Gastrocnemius medialis (tissue), 4 donors: ENCODE measurements at regions of chr11 and their contacts with region 1.

Region 1: DNA sequence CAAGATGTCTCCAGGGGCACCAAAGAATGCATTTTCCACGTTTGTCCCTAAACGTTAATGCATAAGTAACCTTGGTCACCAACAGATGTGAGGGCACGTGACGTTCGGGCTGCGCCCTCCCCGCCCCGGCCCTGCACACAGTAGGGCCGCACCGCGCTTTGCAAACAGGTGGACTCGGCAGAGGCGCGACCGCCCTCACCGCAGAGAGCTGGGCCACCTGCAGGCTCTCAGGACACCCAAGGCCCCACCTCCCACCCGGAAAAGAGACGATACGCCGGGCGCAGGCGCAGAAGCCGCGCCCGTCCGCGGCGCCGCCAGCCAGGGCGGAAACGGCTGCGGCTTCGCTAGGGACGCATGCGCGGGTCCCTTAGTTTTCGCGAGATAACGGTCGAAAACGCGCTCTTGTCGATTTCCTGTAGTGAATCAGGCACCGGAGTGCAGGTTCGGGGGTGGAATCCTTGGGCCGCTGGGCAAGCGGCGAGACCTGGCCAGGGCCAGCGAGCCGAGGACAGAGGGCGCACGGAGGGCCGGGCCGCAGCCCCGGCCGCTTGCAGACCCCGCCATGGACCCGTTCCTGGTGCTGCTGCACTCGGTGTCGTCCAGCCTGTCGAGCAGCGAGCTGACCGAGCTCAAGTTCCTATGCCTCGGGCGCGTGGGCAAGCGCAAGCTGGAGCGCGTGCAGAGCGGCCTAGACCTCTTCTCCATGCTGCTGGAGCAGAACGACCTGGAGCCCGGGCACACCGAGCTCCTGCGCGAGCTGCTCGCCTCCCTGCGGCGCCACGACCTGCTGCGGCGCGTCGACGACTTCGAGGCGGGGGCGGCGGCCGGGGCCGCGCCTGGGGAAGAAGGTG is at the start of gene FADD:
- DNase-seq: peak; percentile 80 to 83
- ATAC-seq: peak; percentile 95
- H3K4me3 ChIP-seq: peak within 1 kb of the TSS; percentile 77 to 97 (median 92)
- H3K27ac ChIP-seq: peak within 1 kb of the TSS; percentile 81 to 92 (median 91)
- H3K4me1 ChIP-seq: peaks cover 14 to 18% of the 10 kb centered on the region in 2 donors
- H3K27me3 ChIP-seq: no peaks in the 10 kb centered on the region
- CTCF ChIP-seq: no peak
- POLR2A ChIP-seq: peak; percentile 70 to 81
- total RNA-seq, gene FADD: 6.9 to 17.3 (median 10.4) TPM

Region 2: GRCh38 chr11:69683764-69684333 is 519.3 kb before region 1 on chr11:
- in situ Hi-C with region 1: loop called (anchors 10 kb)
- intact Hi-C with region 1: no loop called
- DNase-seq: no peak
- ATAC-seq: no peak
- H3K4me3 ChIP-seq: no peak overlapping the region
- H3K27ac ChIP-seq: no peak overlapping the region
- H3K4me1 ChIP-seq: peaks cover 0 to 8% of the 10 kb centered on the region in 2 donors
- H3K27me3 ChIP-seq: peaks cover 0 to 2% (median 0%) of the 10 kb centered on the region in 3 donors
- CTCF ChIP-seq: no peak
- POLR2A ChIP-seq: no peak

Region 3: GRCh38 chr11:70270104-70270876 is 67.2 kb after region 1 on chr11 and contains the start of gene PPFIA1:
- in situ Hi-C with region 1: no loop called
- intact Hi-C with region 1: loop called (anchors 1 kb)
- DNase-seq: peak; percentile 93 to 94
- ATAC-seq: peak; percentile 95 to 96
- H3K4me3 ChIP-seq: peak within 1 kb of the TSS; percentile 74 to 95 (median 82)
- H3K27ac ChIP-seq: peak within 1 kb of the TSS; percentile 80 to 95 (median 86)
- H3K4me1 ChIP-seq: peaks cover 26 to 35% of the 10 kb centered on the region in 2 donors
- H3K27me3 ChIP-seq: peaks cover 0 to 6% (median 2%) of the 10 kb centered on the region in 3 donors
- CTCF ChIP-seq: no peak
- POLR2A ChIP-seq: peak; percentile 98 to 99
- total RNA-seq, gene PPFIA1: 36.3 to 90.6 (median 46.0) TPM

Region 4: GRCh38 chr11:70397983-70398833 is 195.1 kb after region 1 on chr11 and contains the start of gene CTTN:
- in situ Hi-C with region 1: no loop called
- intact Hi-C with region 1: loop called (anchors 10 kb)
- DNase-seq: peak; percentile 56 to 76
- ATAC-seq: peak; percentile 67 to 72
- H3K4me3 ChIP-seq: peak within 1 kb of the TSS; percentile 78 to 99 (median 89)
- H3K27ac ChIP-seq: peak within 1 kb of the TSS; percentile 90 to 97 (median 95)
- H3K4me1 ChIP-seq: peaks cover 24 to 30% of the 10 kb centered on the region in 2 donors
- H3K27me3 ChIP-seq: no peaks in the 10 kb centered on the region
- CTCF ChIP-seq: no peak
- POLR2A ChIP-seq: peak; percentile 95 to 96
- total RNA-seq, gene CTTN: 92.8 to 226 (median 134) TPM